ENCODE measurements at regions of chr9 and their contacts with region 1.

Region 1: DNA sequence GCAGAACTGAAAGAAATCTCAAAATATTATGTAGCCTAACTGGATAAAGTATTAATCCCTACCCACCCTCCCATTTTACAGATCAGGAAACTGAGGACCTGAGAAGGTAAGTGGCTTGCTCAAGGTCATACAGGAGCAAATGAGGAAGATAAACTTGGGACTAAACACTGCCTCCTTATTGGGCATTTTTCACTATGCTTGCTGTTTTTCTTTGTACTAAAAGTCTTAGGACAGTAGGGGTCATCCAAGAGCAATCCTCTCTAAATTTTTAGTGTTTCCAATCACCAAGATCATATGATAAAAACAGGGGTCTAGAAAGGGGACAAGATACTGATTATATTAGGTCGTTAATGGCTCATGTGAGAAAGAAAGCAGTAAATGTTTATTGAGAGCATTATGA is 80.8 kb downstream of the RORB start:
- DNase-seq: no peak
- ATAC-seq: no peak
- H3K4me3 ChIP-seq: no peak overlapping the region
- H3K27ac ChIP-seq: no peak overlapping the region
- H3K4me1 ChIP-seq: no peaks in the 10 kb centered on the region
- H3K27me3 ChIP-seq: no peaks in the 10 kb centered on the region
- CTCF ChIP-seq: peak; percentile 35; the same call in 1 of the 2 replicates

Region 2: GRCh38 chr9:72839085-72839484 is 1738.9 kb before region 1 on chr9:
- CTCF ChIA-PET with region 1: no interaction called
- POLR2A ChIA-PET with region 1: no interaction called
- in situ Hi-C with region 1: no loop called
- intact Hi-C with region 1: no loop called
- DNase-seq: no peak
- ATAC-seq: no peak
- H3K4me3 ChIP-seq: no peak overlapping the region
- H3K27ac ChIP-seq: no peak overlapping the region
- H3K4me1 ChIP-seq: no peaks in the 10 kb centered on the region
- H3K27me3 ChIP-seq: no peaks in the 10 kb centered on the region
- CTCF ChIP-seq: no peak

Region 3: GRCh38 chr9:74645007-74645639 is 67.2 kb after region 1 on chr9:
- CTCF ChIA-PET with region 1: no interaction called
- POLR2A ChIA-PET with region 1: no interaction called
- in situ Hi-C with region 1: no loop called
- intact Hi-C with region 1: loop called (anchors 5 kb)
- DNase-seq: peak; percentile 10
- ATAC-seq: 0 out of 2 replicates have a peak, but pooled peaks have one; percentile 63
- H3K4me3 ChIP-seq: no peak overlapping the region
- H3K27ac ChIP-seq: no peak overlapping the region
- H3K4me1 ChIP-seq: no peaks in the 10 kb centered on the region
- H3K27me3 ChIP-seq: no peaks in the 10 kb centered on the region
- CTCF ChIP-seq: peak; percentile 66; the same call in 1 of the 2 replicates

Region 4: GRCh38 chr9:74742792-74743730 is 165.1 kb after region 1 on chr9:
- CTCF ChIA-PET with region 1: no interaction called
- POLR2A ChIA-PET with region 1: no interaction called
- in situ Hi-C with region 1: no loop called
- intact Hi-C with region 1: loop called (anchors 5 kb)
- DNase-seq: no peak
- ATAC-seq: 0 out of 2 replicates have a peak, but pooled peaks have one; percentile 65
- H3K4me3 ChIP-seq: no peak overlapping the region
- H3K27ac ChIP-seq: no peak overlapping the region
- H3K4me1 ChIP-seq: no peaks in the 10 kb centered on the region
- H3K27me3 ChIP-seq: no peaks in the 10 kb centered on the region; the same call in 1 of the 2 replicates
- CTCF ChIP-seq: peak; percentile 71

Measured in Panc1 (cell line).